ENCODE measurements at regions of chr13 and their contacts with region 1.

Region 1: DNA sequence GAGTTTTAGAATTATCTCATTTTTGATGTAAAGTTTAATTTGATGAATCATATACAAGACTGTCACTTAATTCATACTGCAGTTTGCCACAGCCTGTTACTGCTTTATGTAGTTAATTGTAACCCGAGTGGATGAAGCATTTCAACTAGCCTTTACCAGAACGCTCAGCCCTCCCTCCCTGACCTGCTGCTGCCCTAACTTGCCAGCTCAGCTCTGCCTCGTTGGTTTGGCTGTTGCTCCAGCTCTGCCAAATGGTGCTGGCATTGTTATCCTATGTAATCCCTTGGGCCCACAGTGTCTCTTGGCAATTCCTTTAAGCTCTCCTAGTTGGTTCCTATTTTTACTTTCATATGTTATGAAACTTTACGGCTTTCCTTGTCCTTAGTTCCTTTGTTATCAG is 113.3 kb downstream of the LMO7 start:
- DNase-seq: no peak
- ATAC-seq: peak; percentile 73

Region 2: DNA sequence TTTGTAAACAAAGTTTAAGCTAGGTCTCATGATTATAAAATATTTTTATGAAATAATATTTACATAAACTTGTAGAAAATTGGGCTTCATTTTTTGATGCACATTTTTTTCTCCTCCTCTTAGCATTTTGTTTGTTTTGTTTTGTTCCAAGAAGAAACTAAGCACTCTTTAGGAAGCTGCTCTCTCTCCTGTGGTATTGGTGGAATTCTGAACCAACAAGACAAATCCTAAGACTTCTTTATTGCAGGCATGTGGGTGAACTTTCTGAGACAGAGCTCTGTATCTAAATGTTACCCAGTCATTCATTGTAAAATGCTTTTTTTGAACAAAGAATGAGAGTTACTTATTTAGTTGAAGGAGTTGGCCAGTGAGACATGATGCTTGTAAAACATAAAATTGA is 74.0 kb before region 1 on chr13:
- intact Hi-C with region 1: no loop called
- DNase-seq: no peak
- ATAC-seq: no peak

Region 3: GRCh38 chr13:75691183-75691582 is 58.2 kb before region 1 on chr13:
- intact Hi-C with region 1: loop called (anchors 10 kb)
- DNase-seq: no peak
- ATAC-seq: no peak

Measured in left ventricle myocardium superior (tissue), 1 donor.